ENCODE measurements at regions of chr18 and their contacts with region 1.

Region 1: GRCh38 chr18:79246348-79247108 is 149.2 kb upstream of the NFATC1 start:
- DNase-seq: peak; percentile 83
- H3K4me3 Mint-ChIP-seq: peak overlapping the region; percentile 66
- H3K27ac Mint-ChIP-seq: no peak overlapping the region
- H3K4me1 Mint-ChIP-seq: no peaks in the 10 kb centered on the region
- H3K27me3 Mint-ChIP-seq: no peaks in the 10 kb centered on the region
- CTCF ChIP-seq: peak; percentile 78

Region 2: DNA sequence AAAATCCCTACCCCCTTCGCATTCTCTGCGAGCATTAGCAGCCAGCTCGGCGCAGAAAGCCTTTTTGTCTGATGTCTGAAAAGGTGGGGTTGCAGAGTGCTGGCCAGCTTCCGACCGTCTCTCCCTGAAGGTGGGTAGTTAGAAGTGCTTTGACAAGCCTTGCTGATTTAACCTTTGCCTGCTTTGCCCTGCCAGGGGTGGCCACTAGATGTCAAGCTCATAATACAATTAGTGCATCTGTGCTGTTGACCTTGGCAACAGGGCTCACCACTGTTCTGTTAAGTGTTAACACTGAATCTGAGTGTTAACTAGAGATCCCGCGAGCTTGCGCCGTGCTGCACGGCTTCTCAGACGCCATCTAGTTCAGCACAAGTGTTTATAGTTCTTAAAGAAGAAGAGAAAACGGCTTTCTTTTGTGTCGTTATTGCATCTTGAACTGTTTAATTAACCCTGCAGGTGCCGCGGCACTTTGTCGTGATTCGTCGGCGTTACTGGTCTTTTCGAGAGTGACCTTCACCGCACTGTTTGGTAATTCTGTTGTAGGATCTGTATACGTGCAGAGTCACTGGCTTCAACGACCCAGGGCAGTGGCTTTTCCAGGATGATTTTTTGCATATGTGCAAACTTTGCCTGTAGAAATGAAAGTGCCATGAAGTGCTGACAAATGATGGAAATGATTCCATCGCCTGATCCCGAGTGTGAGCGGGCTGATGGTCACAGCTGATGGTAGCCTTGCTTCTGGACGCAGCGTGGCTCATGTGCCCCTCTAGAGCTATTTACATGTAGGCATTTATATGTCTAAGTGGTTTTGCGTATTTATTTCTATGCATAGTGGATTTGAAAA is 261.4 kb before region 1 on chr18:
- CTCF ChIA-PET with region 1: no interaction called
- intact Hi-C with region 1: loop called (anchors 5 kb)
- DNase-seq: no peak
- H3K4me3 Mint-ChIP-seq: no peak overlapping the region
- H3K27ac Mint-ChIP-seq: no peak overlapping the region
- H3K4me1 Mint-ChIP-seq: no peaks in the 10 kb centered on the region
- H3K27me3 Mint-ChIP-seq: no peaks in the 10 kb centered on the region
- CTCF ChIP-seq: no peak

Region 3: DNA sequence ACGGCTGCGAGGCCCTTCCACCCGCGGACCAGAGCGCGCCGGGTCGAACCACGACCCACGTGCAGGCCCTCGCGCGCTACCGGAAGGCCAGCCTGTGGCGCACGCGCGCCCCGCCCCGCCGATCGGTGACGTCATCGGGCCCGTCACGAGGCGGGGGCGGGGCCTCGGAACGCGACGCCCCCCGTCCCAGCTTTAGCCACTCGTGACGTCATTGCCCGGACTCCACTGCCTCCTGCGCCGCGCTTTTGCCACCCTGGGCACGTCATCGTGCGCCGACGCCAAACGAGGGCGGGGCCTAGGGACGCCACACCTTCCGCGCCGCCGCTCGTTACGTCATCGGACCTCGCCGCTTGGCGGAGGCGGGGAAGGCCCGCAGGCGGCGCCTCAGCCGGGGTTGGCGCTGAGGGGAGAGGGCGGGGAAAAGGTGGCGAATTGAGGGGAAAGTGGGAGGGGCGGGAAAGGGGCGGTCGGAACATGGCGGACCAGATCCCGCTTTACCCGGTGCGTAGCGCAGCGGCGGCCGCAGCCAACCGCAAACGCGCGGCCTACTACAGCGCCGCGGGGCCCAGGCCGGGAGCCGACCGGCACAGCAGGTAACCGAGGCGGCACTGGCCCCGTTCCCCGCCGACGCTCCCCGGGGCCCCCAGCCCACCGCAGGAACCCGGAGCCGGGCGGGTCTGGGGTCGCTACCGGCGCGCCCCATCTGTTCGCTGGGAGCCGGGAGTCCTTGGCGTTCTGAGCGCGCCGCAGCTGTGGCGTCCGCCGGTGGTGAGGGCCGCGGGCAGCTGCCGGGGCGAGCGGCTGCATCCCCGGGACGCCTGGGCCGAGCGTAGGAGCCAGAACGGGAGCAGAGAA is 177.4 kb before region 1 on chr18 and contains the start of gene ATP9B:
- CTCF ChIA-PET with region 1: no interaction called
- intact Hi-C with region 1: loop called (anchors 2 kb)
- DNase-seq: peak; percentile 91
- H3K4me3 Mint-ChIP-seq: peak within 1 kb of the TSS; percentile 65
- H3K27ac Mint-ChIP-seq: peak within 1 kb of the TSS; percentile 81
- H3K4me1 Mint-ChIP-seq: no peaks in the 10 kb centered on the region
- H3K27me3 Mint-ChIP-seq: peaks cover 33% of the 10 kb centered on the region
- CTCF ChIP-seq: no peak
- total RNA-seq, gene ATP9B: 24.6 and 25.6 TPM in 2 replicates

Region 4: DNA sequence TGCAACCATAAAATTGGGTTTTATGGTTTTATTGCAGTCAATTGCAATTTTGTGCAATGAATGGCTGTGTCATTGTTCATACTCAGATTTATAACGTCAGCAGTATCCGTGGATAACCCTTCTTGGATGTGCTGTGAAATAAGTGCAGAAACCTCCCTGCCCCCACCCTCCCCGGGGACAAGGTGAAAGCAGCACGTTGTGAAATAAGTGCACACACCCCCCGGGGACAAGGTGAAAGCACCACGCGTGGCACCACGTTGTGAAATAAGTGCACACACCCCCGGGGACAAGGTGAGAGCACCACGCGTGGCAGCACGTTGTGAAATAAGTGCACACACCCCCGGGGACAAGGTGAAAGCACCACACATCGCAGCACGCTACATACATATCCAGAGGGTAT is 55.6 kb after region 1 on chr18:
- CTCF ChIA-PET with region 1: no interaction called
- intact Hi-C with region 1: no loop called
- DNase-seq: no peak
- H3K4me3 Mint-ChIP-seq: no peak overlapping the region
- H3K27ac Mint-ChIP-seq: no peak overlapping the region
- H3K4me1 Mint-ChIP-seq: no peaks in the 10 kb centered on the region
- H3K27me3 Mint-ChIP-seq: no peaks in the 10 kb centered on the region
- CTCF ChIP-seq: no peak

Region 5: GRCh38 chr18:79458131-79458838 is 211.8 kb after region 1 on chr18:
- CTCF ChIA-PET with region 1: no interaction called
- intact Hi-C with region 1: no loop called
- DNase-seq: peak; percentile 69
- H3K4me3 Mint-ChIP-seq: peak overlapping the region; percentile 44
- H3K27ac Mint-ChIP-seq: peak overlapping the region; percentile 58
- H3K4me1 Mint-ChIP-seq: peaks cover 6% of the 10 kb centered on the region
- H3K27me3 Mint-ChIP-seq: no peaks in the 10 kb centered on the region
- CTCF ChIP-seq: no peak

Region 6: DNA sequence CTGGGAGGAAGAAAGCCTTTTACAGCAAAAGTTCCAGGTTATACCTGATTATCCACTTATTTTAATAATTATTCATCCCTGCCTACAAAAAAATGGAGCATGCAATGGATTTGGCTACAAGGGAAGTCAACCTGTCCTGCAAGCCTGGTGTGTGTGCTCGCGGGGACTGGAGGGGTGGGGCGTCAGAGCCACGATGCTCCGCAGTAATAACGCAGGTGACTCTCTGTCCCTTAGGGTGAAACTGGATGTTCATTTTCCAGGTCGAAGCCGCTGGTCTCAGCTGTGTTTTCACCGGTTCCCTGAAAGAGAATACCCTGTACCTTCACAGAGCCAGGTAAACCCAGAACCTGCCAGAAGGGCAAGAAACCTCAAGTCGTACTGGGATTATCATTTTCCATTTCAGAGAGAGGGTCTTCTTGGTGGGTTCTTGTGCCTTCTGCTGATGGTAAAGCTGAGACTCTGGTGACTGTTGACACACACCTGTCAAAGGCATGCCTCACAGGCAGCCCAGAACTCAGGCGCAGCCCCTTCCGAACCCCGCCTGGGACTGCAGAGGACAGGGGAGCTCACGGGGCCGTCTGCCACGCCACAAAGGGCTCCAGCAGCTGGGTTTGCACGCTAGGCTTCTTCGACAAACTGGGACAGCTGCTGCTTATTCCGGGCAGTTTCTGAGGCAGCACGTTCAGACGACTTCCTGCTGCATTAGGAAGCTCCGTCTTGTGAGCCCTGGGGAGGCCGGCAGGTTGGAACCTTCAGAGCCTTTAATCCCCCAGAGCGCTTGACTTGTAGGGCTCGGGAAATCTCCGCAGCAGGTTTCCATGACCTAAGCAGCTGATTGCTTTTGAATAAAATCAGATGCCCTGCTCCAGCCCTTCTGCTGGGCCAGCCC is 609.8 kb after region 1 on chr18:
- CTCF ChIA-PET with region 1: no interaction called
- intact Hi-C with region 1: no loop called
- DNase-seq: no peak
- H3K4me3 Mint-ChIP-seq: no peak overlapping the region
- H3K27ac Mint-ChIP-seq: no peak overlapping the region
- H3K4me1 Mint-ChIP-seq: no peaks in the 10 kb centered on the region
- H3K27me3 Mint-ChIP-seq: peaks cover 6% of the 10 kb centered on the region
- CTCF ChIP-seq: no peak